Natural killer cell (primary cell): ENCODE measurements at regions of chr15 and their contacts with region 1.

Region 1: GRCh38 chr15:91302588-91303439 is 202.8 kb downstream of the SV2B start:
- DNase-seq: peak in 1 of 2 donors; percentile 78
- ATAC-seq: peak; percentile 70 to 78 (median 73)
- H3K4me3 ChIP-seq: no peak overlapping the region
- H3K4me3 Mint-ChIP-seq: no peak overlapping the region
- H3K27ac ChIP-seq: no peak overlapping the region
- H3K27ac Mint-ChIP-seq: no peak overlapping the region
- H3K4me1 ChIP-seq: peaks cover 3% of the 10 kb centered on the region
- H3K4me1 Mint-ChIP-seq: peaks cover 4 to 5% of the 10 kb centered on the region in 2 donors
- H3K27me3 ChIP-seq: peaks cover 18% of the 10 kb centered on the region
- H3K27me3 Mint-ChIP-seq: peaks cover 43 to 69% of the 10 kb centered on the region in 2 donors
- CTCF ChIP-seq: peak; percentile 79

Region 2: GRCh38 chr15:91278791-91279404 is 23.9 kb before region 1 on chr15:
- intact Hi-C with region 1: no loop called
- DNase-seq: no peak
- ATAC-seq: no peak
- H3K4me3 ChIP-seq: no peak overlapping the region
- H3K4me3 Mint-ChIP-seq: no peak overlapping the region
- H3K27ac ChIP-seq: no peak overlapping the region
- H3K27ac Mint-ChIP-seq: no peak overlapping the region
- H3K4me1 ChIP-seq: no peaks in the 10 kb centered on the region
- H3K4me1 Mint-ChIP-seq: no peaks in the 10 kb centered on the region
- H3K27me3 ChIP-seq: peaks cover 2% of the 10 kb centered on the region
- H3K27me3 Mint-ChIP-seq: peaks cover 15 to 38% of the 10 kb centered on the region in 2 donors
- CTCF ChIP-seq: no peak

Region 3: DNA sequence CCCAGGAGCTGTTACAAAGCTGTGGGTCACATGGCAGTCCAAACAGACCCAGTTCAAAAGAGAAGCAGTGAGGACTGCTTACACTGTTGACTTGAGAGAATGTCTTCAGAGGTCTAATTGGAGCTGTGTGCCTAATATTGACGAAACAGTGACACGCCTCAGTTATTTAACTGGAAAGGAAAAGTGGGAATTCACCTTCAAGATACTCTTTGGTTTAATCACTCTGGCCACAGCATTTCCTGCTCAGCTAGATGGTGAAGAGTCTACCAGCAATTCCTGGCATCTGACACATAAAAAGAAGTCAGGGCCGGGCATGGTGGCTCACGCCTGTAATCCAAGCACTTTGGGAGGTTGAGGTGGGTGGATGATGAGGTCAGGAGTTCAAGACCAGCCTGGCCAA is 123.6 kb after region 1 on chr15:
- intact Hi-C with region 1: loop called (anchors 10 kb)
- DNase-seq: peak in 1 of 2 donors; percentile 54
- ATAC-seq: peak; percentile 55 to 77 (median 67)
- H3K4me3 ChIP-seq: no peak overlapping the region
- H3K4me3 Mint-ChIP-seq: peak overlapping the region; percentile 22
- H3K27ac ChIP-seq: no peak overlapping the region
- H3K27ac Mint-ChIP-seq: no peak overlapping the region
- H3K4me1 ChIP-seq: peaks cover 23% of the 10 kb centered on the region
- H3K4me1 Mint-ChIP-seq: peaks cover 39 to 61% of the 10 kb centered on the region in 2 donors
- H3K27me3 ChIP-seq: no peaks in the 10 kb centered on the region
- H3K27me3 Mint-ChIP-seq: peaks cover 13 to 28% of the 10 kb centered on the region in 2 donors
- CTCF ChIP-seq: no peak

Region 4: GRCh38 chr15:91522663-91523332 is 220.0 kb after region 1 on chr15:
- intact Hi-C with region 1: loop called (anchors 1 kb)
- DNase-seq: peak in 1 of 2 donors; percentile 69
- ATAC-seq: peak; percentile 17 to 60 (median 38)
- H3K4me3 ChIP-seq: no peak overlapping the region
- H3K4me3 Mint-ChIP-seq: no peak overlapping the region
- H3K27ac ChIP-seq: no peak overlapping the region
- H3K27ac Mint-ChIP-seq: no peak overlapping the region
- H3K4me1 ChIP-seq: peaks cover 4% of the 10 kb centered on the region
- H3K4me1 Mint-ChIP-seq: peaks cover 6 to 7% of the 10 kb centered on the region in 2 donors
- H3K27me3 ChIP-seq: peaks cover 2% of the 10 kb centered on the region
- H3K27me3 Mint-ChIP-seq: peaks cover 16 to 17% of the 10 kb centered on the region in 2 donors
- CTCF ChIP-seq: peak; percentile 32

Region 5: GRCh38 chr15:91660174-91660653 is 357.4 kb after region 1 on chr15:
- intact Hi-C with region 1: loop called (anchors 5 kb)
- DNase-seq: peak in 1 of 2 donors; percentile 18
- ATAC-seq: peak; percentile 24 to 56 (median 47)
- H3K4me3 ChIP-seq: no peak overlapping the region
- H3K4me3 Mint-ChIP-seq: no peak overlapping the region
- H3K27ac ChIP-seq: no peak overlapping the region
- H3K27ac Mint-ChIP-seq: no peak overlapping the region
- H3K4me1 ChIP-seq: peaks cover 18% of the 10 kb centered on the region
- H3K4me1 Mint-ChIP-seq: peaks cover 15 to 23% of the 10 kb centered on the region in 2 donors
- H3K27me3 ChIP-seq: peaks cover 10% of the 10 kb centered on the region
- H3K27me3 Mint-ChIP-seq: peaks cover 16 to 44% of the 10 kb centered on the region in 2 donors
- CTCF ChIP-seq: no peak

Region 6: DNA sequence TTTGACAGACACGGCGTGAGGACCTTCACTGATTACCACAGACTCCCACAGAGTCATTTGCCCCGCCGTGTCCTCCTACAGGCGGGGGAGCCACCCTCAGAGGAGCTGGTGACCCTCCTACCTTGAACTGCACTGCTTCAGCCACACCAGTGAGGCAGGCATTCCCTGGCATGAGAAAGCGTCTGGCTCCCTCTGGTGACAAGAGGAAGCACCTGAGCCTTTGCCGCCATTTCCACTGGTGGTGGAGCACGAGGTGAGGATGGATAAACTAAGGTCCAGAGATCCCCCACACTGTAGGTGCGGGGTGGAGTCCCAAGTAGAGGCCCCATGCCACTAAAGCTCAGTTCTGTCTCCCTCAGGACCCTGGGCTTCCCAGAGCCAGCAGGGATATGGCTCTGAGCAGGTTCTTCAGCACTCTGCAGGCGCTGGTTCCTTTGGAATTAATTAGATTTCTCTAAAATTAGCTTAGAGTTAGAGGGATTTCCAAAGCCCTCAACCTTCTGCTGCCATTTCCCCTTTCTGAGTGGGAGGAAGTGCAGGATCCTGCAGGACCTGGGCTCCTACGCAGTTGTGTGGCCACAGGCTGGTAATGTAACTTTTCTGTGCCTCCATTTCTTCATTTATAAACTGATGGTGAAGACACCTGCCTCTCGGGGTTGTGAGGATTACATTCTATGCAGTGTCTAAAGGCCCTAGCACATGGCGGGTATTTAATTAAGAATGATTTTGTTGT is 774.7 kb after region 1 on chr15:
- intact Hi-C with region 1: loop called (anchors 2 kb)
- DNase-seq: peak; percentile 32 to 73
- ATAC-seq: peak; percentile 43 to 76 (median 70)
- H3K4me3 ChIP-seq: no peak overlapping the region
- H3K4me3 Mint-ChIP-seq: no peak overlapping the region
- H3K27ac ChIP-seq: no peak overlapping the region
- H3K27ac Mint-ChIP-seq: no peak overlapping the region
- H3K4me1 ChIP-seq: peaks cover 32% of the 10 kb centered on the region
- H3K4me1 Mint-ChIP-seq: peaks cover 39 to 60% of the 10 kb centered on the region in 2 donors
- H3K27me3 ChIP-seq: no peaks in the 10 kb centered on the region
- H3K27me3 Mint-ChIP-seq: no peaks in the 10 kb centered on the region
- CTCF ChIP-seq: peak; percentile 48